HCT116 (cell line): ENCODE measurements at regions of chr3 and their contacts with region 1.

Region 1: DNA sequence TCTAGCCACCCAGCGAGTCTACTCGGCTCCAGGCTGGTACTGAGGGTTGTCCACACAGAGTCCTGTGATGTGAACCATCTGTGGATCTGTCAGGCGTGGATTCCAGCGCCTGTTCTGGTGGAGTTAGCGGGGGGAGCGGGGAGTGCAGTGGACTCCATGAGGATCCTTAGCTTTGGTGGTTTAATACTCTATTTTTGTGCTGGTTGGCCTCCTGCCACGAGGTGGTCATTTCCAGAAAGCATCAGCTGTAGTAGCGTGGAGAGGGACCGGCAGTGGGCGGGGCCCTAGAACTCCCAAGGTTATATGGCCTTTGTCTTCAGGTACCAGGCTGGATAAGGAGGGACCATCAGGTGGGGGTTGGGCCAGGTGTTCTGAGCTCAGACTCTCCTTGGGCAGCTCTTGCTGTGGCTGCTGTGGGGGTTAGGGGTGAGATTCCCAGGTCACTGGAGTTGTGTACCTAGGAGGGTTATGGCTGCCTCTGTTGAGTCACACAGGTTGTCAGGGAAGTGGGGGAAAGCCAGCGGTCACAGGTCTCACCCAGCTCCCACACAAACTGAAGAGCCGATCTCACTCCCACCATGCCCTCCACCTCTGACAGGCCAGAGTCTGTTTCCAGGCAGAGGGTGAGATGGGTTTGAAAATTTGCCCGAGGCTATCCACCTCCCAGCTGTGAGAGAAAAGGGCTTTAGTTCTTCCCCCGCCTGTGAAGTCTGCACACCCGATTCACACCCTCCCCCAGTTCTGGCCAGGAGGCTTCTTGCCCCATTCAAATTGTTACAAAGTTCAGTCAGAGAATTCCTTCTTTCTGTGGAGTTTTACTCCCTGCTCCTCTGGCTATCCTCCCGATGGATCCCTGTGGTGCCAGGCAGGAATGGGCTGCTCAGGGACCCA is 446.7 kb downstream of the EDEM1 start:
- DNase-seq: no peak
- ATAC-seq: no peak
- H3K4me3 ChIP-seq: no peak overlapping the region
- H3K27ac ChIP-seq: no peak overlapping the region
- H3K4me1 ChIP-seq: no peaks in the 10 kb centered on the region
- H3K27me3 ChIP-seq: no peaks in the 10 kb centered on the region
- CTCF ChIP-seq: no peak
- POLR2A ChIP-seq: no peak
- RAD21 ChIP-seq: no peak

Region 2: DNA sequence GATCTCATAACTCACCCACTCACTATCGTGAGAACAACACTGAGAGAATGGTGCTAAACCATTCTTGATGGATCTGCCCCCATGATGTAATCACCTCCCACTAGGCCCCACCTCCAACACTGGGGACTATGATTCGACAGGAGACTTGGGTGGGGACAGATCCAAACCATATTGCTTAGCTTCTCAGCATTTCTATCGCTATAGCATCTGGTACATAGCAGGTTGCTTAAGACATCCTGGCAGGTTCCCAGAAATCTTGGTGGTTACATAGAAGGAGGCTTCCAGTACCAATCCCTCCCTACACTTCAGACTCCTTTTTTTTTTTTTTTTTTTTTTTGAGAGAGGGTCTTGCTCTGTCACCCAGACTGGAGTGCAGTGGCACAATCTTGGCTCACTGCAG is 41.1 kb after region 1 on chr3:
- CTCF ChIA-PET with region 1: no interaction called
- POLR2A ChIA-PET with region 1: no interaction called
- RAD21 ChIA-PET with region 1: no interaction called
- intact Hi-C with region 1: loop called (anchors 1 kb)
- DNase-seq: no peak
- ATAC-seq: no peak
- H3K4me3 ChIP-seq: no peak overlapping the region
- H3K27ac ChIP-seq: no peak overlapping the region
- H3K4me1 ChIP-seq: no peaks in the 10 kb centered on the region
- H3K27me3 ChIP-seq: no peaks in the 10 kb centered on the region
- CTCF ChIP-seq: no peak
- POLR2A ChIP-seq: no peak
- RAD21 ChIP-seq: no peak